Naive thymus-derived CD4-positive, alpha-beta T cell (primary cell): ENCODE measurements at regions of chr1 and their contacts with region 1.

Region 1: GRCh38 chr1:225441314-225442122 is 13.7 kb upstream of the LBR start:
- DNase-seq: peak in 3 of 9 donors; percentile 15 to 16 (median 16)
- ATAC-seq: no peak
- H3K4me3 ChIP-seq: no peak overlapping the region
- H3K4me3 Mint-ChIP-seq: peak overlapping the region; percentile 25 to 77 (median 63)
- H3K27ac ChIP-seq: peak overlapping the region; percentile 49
- H3K27ac Mint-ChIP-seq: peak overlapping the region; percentile 76 to 94 (median 91)
- H3K4me1 ChIP-seq: peaks cover 18 to 50% of the 10 kb centered on the region in 2 donors
- H3K4me1 Mint-ChIP-seq: peaks cover 47 to 70% (median 62%) of the 10 kb centered on the region in 7 donors
- H3K27me3 ChIP-seq: no peaks in the 10 kb centered on the region
- H3K27me3 Mint-ChIP-seq: peaks cover 0 to 2% (median 0%) of the 10 kb centered on the region in 5 donors

Region 2: GRCh38 chr1:225318706-225319575 is 122.6 kb before region 1 on chr1:
- CTCF ChIA-PET with region 1: interaction called, 4 read pairs
- POLR2A ChIA-PET with region 1: no interaction called
- intact Hi-C with region 1: loop called in 1 of 2 experiments (anchors 1 kb)
- DNase-seq: peak in 5 of 9 donors; percentile 2 to 28 (median 12)
- ATAC-seq: peak; percentile 65
- H3K4me3 ChIP-seq: no peak overlapping the region
- H3K4me3 Mint-ChIP-seq: no peak overlapping the region
- H3K27ac ChIP-seq: no peak overlapping the region
- H3K27ac Mint-ChIP-seq: no peak overlapping the region
- H3K4me1 ChIP-seq: no peaks in the 10 kb centered on the region
- H3K4me1 Mint-ChIP-seq: peaks cover 0 to 4% (median 0%) of the 10 kb centered on the region in 7 donors
- H3K27me3 ChIP-seq: no peaks in the 10 kb centered on the region
- H3K27me3 Mint-ChIP-seq: peaks cover 0 to 10% (median 5%) of the 10 kb centered on the region in 5 donors

Region 3: GRCh38 chr1:225388372-225388771 is 53.1 kb before region 1 on chr1:
- CTCF ChIA-PET with region 1: no interaction called
- POLR2A ChIA-PET with region 1: no interaction called
- intact Hi-C with region 1: no loop called
- DNase-seq: no peak
- ATAC-seq: no peak
- H3K4me3 ChIP-seq: no peak overlapping the region
- H3K4me3 Mint-ChIP-seq: no peak overlapping the region
- H3K27ac ChIP-seq: no peak overlapping the region
- H3K27ac Mint-ChIP-seq: no peak overlapping the region
- H3K4me1 ChIP-seq: no peaks in the 10 kb centered on the region
- H3K4me1 Mint-ChIP-seq: peaks cover 0 to 8% (median 6%) of the 10 kb centered on the region in 7 donors
- H3K27me3 ChIP-seq: no peaks in the 10 kb centered on the region
- H3K27me3 Mint-ChIP-seq: no peaks in the 10 kb centered on the region

Region 4: GRCh38 chr1:225467193-225468020 is 25.9 kb after region 1 on chr1:
- CTCF ChIA-PET with region 1: interaction called, 14 read pairs
- POLR2A ChIA-PET with region 1: interaction called, 131 read pairs
- intact Hi-C with region 1: loop called (anchors 1 kb)
- DNase-seq: peak; percentile 57 to 85 (median 81)
- ATAC-seq: peak; percentile 91
- H3K4me3 ChIP-seq: peak overlapping the region; percentile 94
- H3K4me3 Mint-ChIP-seq: peak overlapping the region; percentile 81 to 94 (median 92)
- H3K27ac ChIP-seq: peak overlapping the region; percentile 85
- H3K27ac Mint-ChIP-seq: peak overlapping the region; percentile 89 to 98 (median 98)
- H3K4me1 ChIP-seq: peaks cover 22 to 40% of the 10 kb centered on the region in 2 donors
- H3K4me1 Mint-ChIP-seq: peaks cover 33 to 65% (median 48%) of the 10 kb centered on the region in 7 donors
- H3K27me3 ChIP-seq: no peaks in the 10 kb centered on the region
- H3K27me3 Mint-ChIP-seq: no peaks in the 10 kb centered on the region

Region 5: DNA sequence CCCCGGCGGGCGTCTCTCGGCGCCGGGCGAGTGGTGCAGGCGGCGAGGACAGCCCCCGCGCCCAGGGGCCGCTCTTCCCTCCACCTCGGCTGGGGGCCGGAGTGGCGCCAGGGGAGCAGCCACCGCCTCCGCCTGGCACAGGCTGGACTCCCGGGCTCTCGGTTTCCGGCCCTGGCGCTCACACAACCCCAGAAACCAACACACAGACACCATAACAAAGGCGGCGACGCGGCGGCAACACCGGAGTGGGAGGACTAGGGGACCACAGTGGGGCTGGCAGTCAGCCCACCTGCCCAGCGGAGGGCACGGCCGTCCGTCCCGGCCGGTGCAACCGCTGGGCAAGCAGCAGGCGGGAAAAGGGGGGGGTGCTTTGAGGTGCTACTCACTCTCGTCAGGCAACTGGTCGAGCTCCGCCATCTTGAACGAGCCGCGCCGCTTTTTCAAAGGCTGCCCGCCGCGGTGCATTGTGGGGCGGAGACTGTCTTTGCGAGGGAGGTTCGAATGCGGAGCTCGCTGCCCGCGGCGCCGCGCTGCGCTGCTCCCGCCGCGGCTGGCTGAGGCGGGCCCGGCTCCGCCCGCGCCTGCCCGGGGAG is 867.3 kb after region 1 on chr1 and contains the start of gene LIN9:
- CTCF ChIA-PET with region 1: no interaction called
- POLR2A ChIA-PET with region 1: no interaction called
- intact Hi-C with region 1: loop called in 1 of 2 experiments (anchors 10 kb)
- DNase-seq: peak; percentile 83 to 94 (median 88)
- ATAC-seq: peak; percentile 97
- H3K4me3 ChIP-seq: peak within 1 kb of the TSS; percentile 99
- H3K4me3 Mint-ChIP-seq: peak within 1 kb of the TSS; percentile 88 to 95 (median 92)
- H3K27ac ChIP-seq: peak within 1 kb of the TSS; percentile 76
- H3K27ac Mint-ChIP-seq: peak within 1 kb of the TSS; percentile 34 to 97 (median 85)
- H3K4me1 ChIP-seq: peaks cover 5% of the 10 kb centered on the region in 2 donors
- H3K4me1 Mint-ChIP-seq: peaks cover 14 to 37% (median 22%) of the 10 kb centered on the region in 7 donors
- H3K27me3 ChIP-seq: peaks cover 0 to 4% of the 10 kb centered on the region in 2 donors
- H3K27me3 Mint-ChIP-seq: peaks cover 5 to 19% (median 14%) of the 10 kb centered on the region in 5 donors
- total RNA-seq, gene LIN9: 2.0 to 8.0 (median 5.0) TPM